Left cardiac atrium (tissue), 4 donors: ENCODE measurements at regions of chr1 and their contacts with region 1.

Region 1: GRCh38 chr1:206489980-206490770 is 17.2 kb upstream of the RASSF5 start:
- DNase-seq: peak; percentile 82
- ATAC-seq: peak; percentile 81 to 85

Region 2: DNA sequence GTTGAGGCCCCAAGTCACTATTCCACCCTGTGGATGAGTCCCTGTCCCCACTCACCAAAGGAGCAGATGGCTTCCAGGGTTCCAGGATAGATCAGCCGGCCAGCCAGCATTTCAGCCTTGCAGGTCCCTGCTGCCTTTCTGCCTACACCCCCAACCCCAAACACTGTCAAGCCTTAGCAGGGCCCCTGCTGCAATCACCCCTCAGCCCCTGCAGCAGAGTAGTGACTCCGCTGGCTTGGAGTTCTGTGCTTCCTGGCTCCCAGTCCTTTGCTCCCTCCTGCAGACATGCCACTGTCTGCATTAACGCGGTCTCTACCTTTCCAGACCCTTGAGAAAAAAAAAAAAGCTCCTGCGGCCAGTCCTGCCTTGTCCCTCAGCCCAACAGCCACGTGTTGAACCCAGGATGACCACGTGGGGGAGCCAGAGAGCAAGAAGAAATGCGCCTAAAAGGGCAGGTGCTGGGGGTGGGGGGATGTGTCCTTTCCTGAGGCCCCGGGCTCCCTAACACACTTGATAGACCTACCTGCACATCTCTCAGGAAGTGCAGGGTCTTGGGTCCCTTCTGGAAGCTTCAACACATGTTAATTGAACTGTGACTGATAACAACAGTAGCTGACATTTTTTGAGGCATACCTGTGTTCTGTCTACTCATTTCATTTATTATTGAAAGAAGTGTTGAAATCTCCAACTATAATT is 54.5 kb after region 1 on chr1:
- intact Hi-C with region 1: loop called in 1 of 2 experiments (anchors 5 kb)
- DNase-seq: peak; percentile 77
- ATAC-seq: peak; percentile 60 to 62